Esophagus muscularis mucosa (tissue), 4 donors: ENCODE measurements at regions of chr4 and their contacts with region 1.

Region 1: GRCh38 chr4:138919094-138919936 is 96.3 kb upstream of the NOCT start:
- DNase-seq: peak; percentile 12
- H3K4me3 ChIP-seq: no peak overlapping the region
- H3K27ac ChIP-seq: no peak overlapping the region
- H3K4me1 ChIP-seq: peaks cover 0 to 9% (median 4%) of the 10 kb centered on the region in 4 donors
- H3K27me3 ChIP-seq: no peaks in the 10 kb centered on the region
- CTCF ChIP-seq: peak; percentile 56 to 82 (median 74)
- EP300 ChIP-seq: no peak
- POLR2A ChIP-seq: no peak

Region 2: DNA sequence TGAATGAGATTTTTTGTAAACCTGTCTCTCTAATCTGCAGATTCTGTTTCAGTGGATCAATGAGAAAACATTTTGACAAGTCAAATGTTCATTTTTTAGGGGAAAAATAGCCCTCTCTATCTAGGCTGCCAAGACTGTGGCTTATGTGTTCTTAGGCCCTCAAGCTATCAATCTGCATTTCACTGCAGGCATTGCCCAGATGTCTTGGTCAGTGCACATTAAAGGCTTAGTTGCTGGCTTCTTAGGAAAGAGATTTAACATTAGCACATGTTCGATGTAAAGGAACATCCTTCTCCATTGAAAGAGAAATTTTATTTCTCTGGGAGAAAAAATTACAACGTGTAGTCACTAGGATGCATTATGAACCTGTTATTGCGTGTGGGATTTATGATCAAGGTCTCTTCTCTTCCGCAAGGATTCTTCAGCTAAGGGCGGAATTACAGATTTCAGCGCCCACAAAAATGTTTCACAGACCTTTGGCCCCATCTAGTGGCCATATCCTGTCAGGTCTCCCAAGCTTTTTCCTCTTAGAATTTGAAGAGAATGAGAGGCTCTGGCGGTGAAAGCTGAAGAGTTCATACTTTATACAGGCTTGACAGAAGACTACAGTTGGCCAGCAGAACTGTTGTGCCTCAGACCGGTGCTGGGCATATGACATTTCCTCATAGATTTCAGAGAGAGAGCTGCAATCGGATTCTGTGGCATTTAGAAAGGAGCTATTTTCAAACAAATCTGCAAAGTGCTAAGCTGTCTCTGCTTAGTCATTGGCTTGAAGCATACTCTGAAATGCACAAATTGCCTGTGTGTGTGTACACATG is 48.4 kb before region 1 on chr4:
- intact Hi-C with region 1: loop called (anchors 2 kb)
- DNase-seq: no peak
- H3K4me3 ChIP-seq: no peak overlapping the region
- H3K27ac ChIP-seq: no peak overlapping the region
- H3K4me1 ChIP-seq: peaks cover 5 to 11% (median 8%) of the 10 kb centered on the region in 4 donors
- H3K27me3 ChIP-seq: no peaks in the 10 kb centered on the region
- CTCF ChIP-seq: peak; percentile 84 to 90 (median 89)
- EP300 ChIP-seq: no peak
- POLR2A ChIP-seq: no peak

Region 3: GRCh38 chr4:139202991-139203390 is 283.7 kb after region 1 on chr4:
- intact Hi-C with region 1: no loop called
- DNase-seq: no peak
- H3K4me3 ChIP-seq: no peak overlapping the region
- H3K27ac ChIP-seq: no peak overlapping the region
- H3K4me1 ChIP-seq: peaks cover 0 to 8% (median 0%) of the 10 kb centered on the region in 4 donors
- H3K27me3 ChIP-seq: no peaks in the 10 kb centered on the region
- CTCF ChIP-seq: no peak
- EP300 ChIP-seq: no peak
- POLR2A ChIP-seq: no peak